ENCODE measurements at regions of chr7 and their contacts with region 1.

Region 1: GRCh38 chr7:2757904-2758672 is 70.1 kb downstream of the AMZ1 start:
- DNase-seq: peak; percentile 50
- ATAC-seq: peak; percentile 16 to 77

Region 2: DNA sequence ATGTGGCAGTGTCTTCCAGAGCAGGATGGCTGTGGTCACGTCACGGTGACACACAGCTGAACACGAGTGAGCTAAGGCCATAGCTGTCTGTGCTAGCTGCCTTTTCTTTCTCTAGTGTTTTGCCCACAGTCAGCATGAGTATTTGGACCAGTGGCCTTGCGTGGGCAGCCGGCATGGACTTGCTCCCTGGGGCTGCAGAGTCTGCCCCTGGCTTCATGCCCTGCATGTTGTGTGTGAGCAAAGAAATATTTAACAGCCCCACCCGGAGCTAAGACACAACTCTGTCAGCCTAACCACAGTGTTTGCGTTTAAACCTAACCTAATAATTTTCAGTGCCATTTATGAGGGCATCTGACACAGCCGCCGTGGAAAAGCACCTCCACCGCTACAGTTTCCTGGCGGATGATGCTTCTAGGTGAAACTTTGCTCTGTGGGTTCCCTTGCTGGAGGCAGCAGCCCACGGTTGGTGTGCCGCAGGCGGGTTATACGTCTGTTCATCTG is 340.1 kb before region 1 on chr7:
- intact Hi-C with region 1: no loop called
- DNase-seq: peak; percentile 63
- ATAC-seq: peak; percentile 57 to 75

Region 3: DNA sequence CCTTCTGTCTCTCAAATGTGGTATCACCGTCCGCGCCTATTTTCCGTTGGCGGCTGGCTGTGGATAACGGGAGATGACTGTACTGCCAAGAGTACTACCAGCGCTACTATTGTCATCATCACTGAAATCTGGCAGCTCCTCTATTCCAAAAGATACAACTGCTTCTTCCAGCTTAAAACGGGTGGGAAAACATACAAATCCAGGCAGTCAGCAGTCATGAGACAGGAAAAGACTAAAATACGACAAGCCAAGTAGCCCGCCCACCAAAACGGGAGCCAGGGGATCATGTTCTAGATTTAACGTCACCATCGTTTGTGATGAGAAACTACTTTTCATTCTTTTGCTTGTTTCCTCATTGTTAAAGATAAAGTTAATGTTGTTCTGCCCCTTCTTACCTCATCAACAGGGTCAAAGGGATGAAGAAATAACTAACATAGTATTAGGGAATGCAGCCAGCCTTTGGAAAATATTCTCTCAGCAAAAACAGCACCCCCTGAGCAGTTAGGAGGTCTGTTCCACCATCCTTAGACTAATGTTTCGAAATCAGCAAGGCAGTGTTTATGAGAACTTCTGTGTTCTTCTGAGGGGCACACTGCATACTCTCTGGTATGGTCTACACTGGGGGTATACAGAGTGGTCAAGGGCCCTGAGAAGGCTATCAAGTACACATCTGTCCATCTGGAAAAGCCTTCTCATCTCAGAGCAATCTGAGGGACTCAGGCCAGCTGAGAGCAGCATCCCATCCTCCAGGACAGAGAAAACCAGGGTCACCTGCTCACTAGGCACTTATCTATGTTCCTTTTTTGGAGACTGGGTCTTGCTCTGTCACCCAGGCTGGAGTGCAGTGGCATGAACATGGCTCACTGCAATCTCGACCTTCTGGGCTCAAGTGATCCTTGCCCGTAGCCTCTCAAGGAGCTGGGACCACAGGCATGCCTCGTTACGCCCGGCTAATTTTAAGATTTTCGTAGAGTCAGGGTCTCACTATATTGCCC is 38.6 kb after region 1 on chr7:
- intact Hi-C with region 1: loop called in 1 of 2 experiments (anchors 5 kb)
- DNase-seq: peak; percentile 85
- ATAC-seq: peak; percentile 82 to 85